ENCODE measurements at regions of chr18 and their contacts with region 1.

Region 1: DNA sequence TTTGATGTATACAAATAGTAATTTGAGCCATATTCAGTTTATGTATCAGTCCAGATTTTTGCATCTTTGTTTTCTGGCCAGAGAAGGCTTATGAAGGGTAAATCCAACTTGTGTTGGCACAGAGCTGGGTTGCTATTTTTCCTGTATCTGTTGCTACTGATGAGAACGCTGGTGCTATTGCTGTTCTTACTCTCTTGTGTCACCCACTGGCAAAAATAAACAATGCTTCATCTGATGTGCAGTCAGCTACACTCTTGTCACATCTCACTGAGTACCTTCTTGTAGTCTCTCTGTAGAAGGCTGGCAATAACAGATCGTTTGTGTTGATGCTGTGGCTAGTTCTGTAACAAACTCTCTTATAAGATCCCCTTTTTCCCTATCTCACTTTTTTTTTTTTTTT is 323.4 kb downstream of the CDH19 start:
- DNase-seq: no peak
- ATAC-seq: peak; percentile 83

Region 2: DNA sequence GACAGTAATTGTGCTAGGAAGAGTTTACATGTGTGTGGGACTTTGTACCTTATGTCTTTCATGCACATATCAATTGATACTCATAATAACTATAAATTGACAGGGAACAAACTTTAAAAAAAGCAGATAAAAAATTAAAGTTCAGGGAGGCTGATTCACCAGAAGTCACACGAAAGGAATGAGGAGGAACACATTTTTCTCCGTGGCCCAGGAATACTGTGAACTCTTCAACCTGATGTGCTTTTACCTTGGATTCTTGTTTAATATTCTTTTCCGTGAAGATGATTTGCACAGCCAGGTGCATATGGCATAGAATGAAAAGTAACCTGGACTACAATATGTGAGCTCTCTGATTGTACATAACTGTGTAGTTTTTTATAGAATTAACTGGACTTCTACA is 203.4 kb before region 1 on chr18:
- intact Hi-C with region 1: no loop called
- DNase-seq: no peak
- ATAC-seq: no peak

Region 3: GRCh38 chr18:66124394-66124793 is 156.1 kb before region 1 on chr18:
- intact Hi-C with region 1: loop called (anchors 10 kb)
- DNase-seq: no peak
- ATAC-seq: no peak

Region 4: GRCh38 chr18:66136039-66136438 is 144.4 kb before region 1 on chr18:
- intact Hi-C with region 1: no loop called
- DNase-seq: no peak
- ATAC-seq: peak; percentile 98

Region 5: DNA sequence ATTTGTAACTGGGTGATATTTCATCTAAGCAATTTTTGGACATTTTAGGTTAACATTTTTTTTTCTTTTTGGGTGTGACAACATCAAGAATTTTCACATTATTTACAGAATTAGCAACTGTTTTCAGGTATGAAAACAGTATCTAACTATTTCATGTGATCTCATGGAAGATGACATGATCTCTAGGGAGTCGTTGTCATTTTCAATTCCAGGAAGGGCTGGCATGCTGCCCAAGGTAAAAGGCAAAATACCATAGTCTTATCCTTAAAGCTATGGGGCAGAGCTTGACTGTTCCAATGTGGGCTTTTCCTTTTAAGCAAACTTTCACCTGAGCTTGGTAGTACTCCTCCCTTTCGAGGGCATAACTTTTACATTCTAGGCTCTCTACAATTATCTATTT is 792.3 kb after region 1 on chr18:
- intact Hi-C with region 1: no loop called
- DNase-seq: no peak
- ATAC-seq: no peak

Measured in left ventricle myocardium superior (tissue), 1 donor.